SK-N-SH (cell line): ENCODE measurements at regions of chr4 and their contacts with region 1.

Region 1: DNA sequence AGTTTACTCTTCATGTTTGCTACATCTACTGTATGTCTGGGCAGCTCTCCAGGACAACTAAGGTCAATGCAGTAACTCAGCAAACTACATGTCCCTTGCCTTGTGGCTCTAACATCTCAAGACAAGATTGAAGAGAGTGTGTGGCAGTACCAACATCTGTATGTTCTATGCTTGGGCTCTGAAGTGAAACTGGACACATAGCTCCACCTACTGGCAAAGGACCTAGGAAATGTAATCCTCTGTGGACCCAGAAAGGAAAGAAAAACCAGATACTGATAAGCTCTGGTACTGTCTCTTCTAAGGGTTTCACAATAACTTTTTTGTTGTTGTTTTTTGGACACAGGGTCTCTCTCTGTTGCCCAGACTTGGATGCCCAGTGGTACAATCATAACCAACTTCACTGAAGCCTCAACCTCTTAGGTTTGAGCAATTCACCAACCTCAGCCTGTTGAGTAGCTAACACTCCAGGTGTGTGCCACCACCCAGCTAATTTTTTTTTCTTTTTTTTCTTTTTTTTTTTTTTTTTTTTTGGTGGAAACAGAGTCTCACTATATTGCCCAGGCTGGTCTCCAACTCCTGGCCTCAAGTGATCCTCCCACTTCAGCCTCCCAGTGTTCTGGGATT is 64.1 kb downstream of the QDPR start:
- DNase-seq: peak; percentile 69
- H3K4me3 ChIP-seq: peak overlapping the region in 1 of 2 experiments; percentile 12; a peak in 1 of 4 replicates
- H3K27ac ChIP-seq: no peak overlapping the region
- H3K4me1 ChIP-seq: peaks cover 0 to 4% of the 10 kb centered on the region in 2 experiments; a peak in 1 of 4 replicates
- H3K27me3 ChIP-seq: no peaks in the 10 kb centered on the region
- CTCF ChIP-seq: peak; percentile 80
- EP300 ChIP-seq: no peak
- RAD21 ChIP-seq: peak; percentile 93

Region 2: DNA sequence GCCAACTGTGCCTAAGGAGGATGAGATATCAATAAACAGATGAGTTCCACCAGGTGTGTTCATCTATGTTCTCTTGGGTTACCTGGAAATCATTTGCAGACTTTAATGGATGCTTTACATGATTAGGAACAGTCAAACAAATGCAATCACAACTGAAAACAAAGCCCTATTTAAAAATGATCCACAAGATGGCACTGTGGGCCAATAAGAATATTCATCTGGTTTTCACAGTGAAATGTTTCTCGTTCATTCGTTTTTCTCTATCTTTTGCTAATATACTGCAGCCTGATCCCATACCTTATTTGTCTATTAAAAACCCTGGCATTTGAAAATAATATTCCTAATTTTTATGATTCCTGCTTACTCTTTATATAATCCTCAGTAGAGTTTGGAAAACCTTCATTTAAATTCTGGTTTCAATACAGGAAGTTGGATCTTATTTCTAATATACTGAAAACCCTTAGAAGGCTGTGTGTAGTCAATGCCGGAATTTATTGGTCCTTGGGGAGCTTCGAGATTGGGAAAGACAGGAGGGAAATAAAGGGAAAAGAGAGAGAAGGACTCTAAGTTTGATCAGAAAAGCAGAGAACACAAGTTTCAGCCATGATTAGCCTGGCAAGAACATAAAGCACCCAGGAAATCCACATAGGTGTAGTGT is 1157.8 kb before region 1 on chr4:
- CTCF ChIA-PET with region 1: interaction called, 11 read pairs
- POLR2A ChIA-PET with region 1: no interaction called
- DNase-seq: peak; percentile 51
- H3K4me3 ChIP-seq: peak overlapping the region in 1 of 2 experiments; percentile 26; a peak in 1 of 4 replicates
- H3K27ac ChIP-seq: no peak overlapping the region
- H3K4me1 ChIP-seq: peaks cover 0 to 5% of the 10 kb centered on the region in 2 experiments; a peak in 2 of 4 replicates
- H3K27me3 ChIP-seq: no peaks in the 10 kb centered on the region
- CTCF ChIP-seq: peak; percentile 82
- EP300 ChIP-seq: no peak
- RAD21 ChIP-seq: peak; percentile 81

Region 3: GRCh38 chr4:17324386-17324830 is 123.4 kb before region 1 on chr4:
- CTCF ChIA-PET with region 1: interaction called, 17 read pairs
- POLR2A ChIA-PET with region 1: no interaction called
- DNase-seq: peak; percentile 59
- H3K4me3 ChIP-seq: peak overlapping the region in 1 of 2 experiments; percentile 46; a peak in 2 of 4 replicates
- H3K27ac ChIP-seq: peak overlapping the region in 1 of 2 experiments; percentile 51; a peak in 1 of 4 replicates
- H3K4me1 ChIP-seq: peaks cover 0 to 10% of the 10 kb centered on the region in 2 experiments; a peak in 2 of 4 replicates
- H3K27me3 ChIP-seq: no peaks in the 10 kb centered on the region
- CTCF ChIP-seq: peak; percentile 88
- EP300 ChIP-seq: no peak
- RAD21 ChIP-seq: peak; percentile 87

Region 4: DNA sequence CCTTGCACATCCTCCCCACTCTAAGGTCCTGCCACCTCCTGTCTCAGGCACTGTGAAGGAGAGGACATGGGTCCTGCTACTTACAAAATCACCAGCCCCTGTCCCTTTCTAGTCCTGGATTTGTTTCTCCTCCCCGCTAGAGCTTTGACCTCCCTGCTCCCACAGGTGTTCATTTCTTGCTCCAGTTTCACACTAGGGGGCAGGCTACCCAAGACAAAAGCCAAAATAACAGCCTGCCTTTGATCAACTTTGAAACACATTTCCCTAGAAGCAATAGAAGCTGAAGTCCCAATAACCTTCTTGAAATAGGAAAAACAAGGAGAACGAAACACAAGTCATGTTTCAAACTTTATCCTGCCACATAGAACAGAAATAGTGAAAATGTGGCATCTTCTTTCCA is 100.3 kb before region 1 on chr4:
- CTCF ChIA-PET with region 1: interaction called, 73 read pairs
- POLR2A ChIA-PET with region 1: no interaction called
- DNase-seq: peak; percentile 46
- H3K4me3 ChIP-seq: peak overlapping the region in 1 of 2 experiments; percentile 31; a peak in 1 of 4 replicates
- H3K27ac ChIP-seq: no peak overlapping the region
- H3K4me1 ChIP-seq: no peaks in the 10 kb centered on the region
- H3K27me3 ChIP-seq: no peaks in the 10 kb centered on the region
- CTCF ChIP-seq: peak; percentile 66
- EP300 ChIP-seq: no peak
- RAD21 ChIP-seq: peak; percentile 73

Region 5: DNA sequence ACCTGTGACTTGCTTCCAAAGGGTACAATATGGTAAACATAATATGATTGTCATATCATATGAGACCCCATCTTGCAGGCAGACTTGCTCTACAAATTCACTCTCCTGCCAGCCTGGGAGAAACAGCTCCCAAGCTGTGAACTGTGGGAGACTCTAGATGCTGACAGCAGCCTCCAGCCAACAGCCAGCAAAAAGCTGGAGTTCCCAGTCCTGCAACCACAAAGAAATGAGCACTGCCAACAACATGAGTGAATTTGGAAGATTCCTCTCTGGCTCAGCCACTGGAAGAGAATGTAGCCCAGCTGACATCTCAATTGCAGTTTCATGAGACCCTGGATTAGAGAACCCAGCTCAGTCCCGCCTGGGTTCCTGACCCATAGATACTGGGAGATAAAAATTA is 81.3 kb before region 1 on chr4:
- CTCF ChIA-PET with region 1: interaction called, 11 read pairs
- POLR2A ChIA-PET with region 1: no interaction called
- DNase-seq: no peak
- H3K4me3 ChIP-seq: no peak overlapping the region
- H3K27ac ChIP-seq: no peak overlapping the region
- H3K4me1 ChIP-seq: no peaks in the 10 kb centered on the region
- H3K27me3 ChIP-seq: peaks cover 6% of the 10 kb centered on the region
- CTCF ChIP-seq: no peak
- EP300 ChIP-seq: no peak
- RAD21 ChIP-seq: no peak

Region 6: DNA sequence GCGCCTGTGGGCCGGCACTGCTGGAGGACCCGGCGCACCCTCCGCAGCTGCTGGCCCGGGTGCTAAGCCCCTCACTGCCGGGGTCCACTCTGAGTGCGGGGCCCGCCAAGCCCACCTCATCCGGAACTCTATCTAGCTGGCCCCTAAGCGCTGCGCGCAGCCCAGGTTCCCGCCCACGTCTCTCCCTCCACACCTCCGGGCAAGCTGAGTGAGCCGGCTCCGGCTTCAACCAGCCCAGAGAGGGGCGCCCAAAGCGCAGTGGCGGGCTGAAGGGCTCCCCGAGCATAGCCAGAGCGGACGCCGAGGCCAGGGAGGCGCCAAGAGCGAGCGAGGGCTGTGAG is 11.1 kb before region 1 on chr4:
- CTCF ChIA-PET with region 1: interaction called, 11 read pairs
- POLR2A ChIA-PET with region 1: no interaction called
- DNase-seq: no peak
- H3K4me3 ChIP-seq: no peak overlapping the region
- H3K27ac ChIP-seq: no peak overlapping the region
- H3K4me1 ChIP-seq: no peaks in the 10 kb centered on the region
- H3K27me3 ChIP-seq: no peaks in the 10 kb centered on the region
- CTCF ChIP-seq: no peak
- EP300 ChIP-seq: no peak
- RAD21 ChIP-seq: no peak